PC-3 (cell line): ENCODE measurements at regions of chr16 and their contacts with region 1.

Region 1: GRCh38 chr16:19389246-19389645 is 28.4 kb upstream of the TMC5 start:
- DNase-seq: peak; percentile 49
- ATAC-seq: peak; percentile 67
- H3K4me3 ChIP-seq: no peak overlapping the region
- H3K27ac ChIP-seq: no peak overlapping the region
- H3K4me1 ChIP-seq: peaks cover 28% of the 10 kb centered on the region
- H3K27me3 ChIP-seq: no peaks in the 10 kb centered on the region
- CTCF ChIP-seq: peak; percentile 71

Region 2: DNA sequence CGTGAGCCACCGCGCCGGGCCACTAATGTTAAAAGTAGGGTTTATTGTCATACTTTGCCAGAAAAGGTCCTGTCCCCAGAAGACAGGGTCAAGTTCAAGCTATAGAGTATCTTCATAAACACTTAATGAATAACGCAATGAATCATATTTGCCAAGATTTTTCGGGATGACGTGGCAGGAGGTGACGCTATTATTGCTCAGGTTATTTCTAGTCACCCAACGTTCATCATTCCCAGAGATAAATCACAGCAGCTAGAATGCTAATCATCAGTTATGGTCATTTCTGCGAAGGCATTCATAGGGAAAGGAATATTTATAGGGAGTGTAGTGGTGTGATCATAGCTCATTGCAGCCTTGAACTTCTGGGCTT is 30.4 kb after region 1 on chr16:
- CTCF ChIA-PET with region 1: no interaction called
- POLR2A ChIA-PET with region 1: interaction called, 11 read pairs
- intact Hi-C with region 1: no loop called
- DNase-seq: peak; percentile 98
- ATAC-seq: peak; percentile 91
- H3K4me3 ChIP-seq: no peak overlapping the region
- H3K27ac ChIP-seq: peak overlapping the region; percentile 87
- H3K4me1 ChIP-seq: peaks cover 22% of the 10 kb centered on the region
- H3K27me3 ChIP-seq: no peaks in the 10 kb centered on the region
- CTCF ChIP-seq: no peak

Region 3: GRCh38 chr16:19432429-19432828 is 43.2 kb after region 1 on chr16:
- CTCF ChIA-PET with region 1: no interaction called
- POLR2A ChIA-PET with region 1: no interaction called
- intact Hi-C with region 1: loop called (anchors 2 kb)
- DNase-seq: peak; percentile 48
- ATAC-seq: peak; percentile 21; the same call in 1 of the 2 replicates
- H3K4me3 ChIP-seq: no peak overlapping the region
- H3K27ac ChIP-seq: peak overlapping the region; percentile 65
- H3K4me1 ChIP-seq: peaks cover 19% of the 10 kb centered on the region
- H3K27me3 ChIP-seq: no peaks in the 10 kb centered on the region
- CTCF ChIP-seq: no peak

Region 4: DNA sequence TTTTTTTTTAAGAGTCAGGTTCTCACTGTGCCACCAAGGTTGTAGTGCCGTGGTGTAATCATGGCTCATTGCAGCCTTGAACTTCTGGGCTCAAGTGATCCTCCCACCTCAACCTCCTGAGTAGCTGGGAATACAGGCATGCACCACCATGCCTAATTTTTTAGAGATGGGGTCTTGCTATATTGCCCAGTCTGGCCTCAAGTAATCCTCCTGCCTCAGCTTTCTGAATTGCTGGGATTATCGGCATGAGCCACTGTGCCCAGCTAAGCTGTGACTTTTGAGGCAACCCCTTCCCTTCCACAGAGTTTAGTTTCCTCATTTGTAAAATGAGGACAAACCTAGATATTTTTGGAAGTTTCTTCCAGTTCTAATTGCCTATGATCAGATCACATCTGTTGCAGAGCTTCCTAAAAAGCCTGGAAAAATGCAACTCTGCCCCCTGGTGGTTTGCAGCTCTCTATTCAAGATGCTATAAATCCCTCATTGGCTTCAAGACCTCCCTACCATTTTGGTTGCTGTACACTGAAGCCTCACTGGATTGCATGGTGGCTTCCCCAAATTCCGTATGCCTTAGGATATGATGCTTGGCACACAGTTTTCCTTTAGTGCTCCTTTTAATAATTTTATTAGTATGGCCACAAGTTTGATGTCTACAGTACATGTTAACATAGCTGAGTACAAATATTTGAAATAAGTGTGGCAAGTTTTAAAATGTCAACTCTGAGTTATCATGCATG is 113.3 kb after region 1 on chr16:
- CTCF ChIA-PET with region 1: interaction called, 6 read pairs
- POLR2A ChIA-PET with region 1: no interaction called
- intact Hi-C with region 1: loop called (anchors 1 kb)
- DNase-seq: peak; percentile 74
- ATAC-seq: peak; percentile 77
- H3K4me3 ChIP-seq: no peak overlapping the region
- H3K27ac ChIP-seq: no peak overlapping the region
- H3K4me1 ChIP-seq: peaks cover 29% of the 10 kb centered on the region
- H3K27me3 ChIP-seq: no peaks in the 10 kb centered on the region
- CTCF ChIP-seq: peak; percentile 79